ENCODE measurements at regions of chr3 and their contacts with region 1.

Region 1: DNA sequence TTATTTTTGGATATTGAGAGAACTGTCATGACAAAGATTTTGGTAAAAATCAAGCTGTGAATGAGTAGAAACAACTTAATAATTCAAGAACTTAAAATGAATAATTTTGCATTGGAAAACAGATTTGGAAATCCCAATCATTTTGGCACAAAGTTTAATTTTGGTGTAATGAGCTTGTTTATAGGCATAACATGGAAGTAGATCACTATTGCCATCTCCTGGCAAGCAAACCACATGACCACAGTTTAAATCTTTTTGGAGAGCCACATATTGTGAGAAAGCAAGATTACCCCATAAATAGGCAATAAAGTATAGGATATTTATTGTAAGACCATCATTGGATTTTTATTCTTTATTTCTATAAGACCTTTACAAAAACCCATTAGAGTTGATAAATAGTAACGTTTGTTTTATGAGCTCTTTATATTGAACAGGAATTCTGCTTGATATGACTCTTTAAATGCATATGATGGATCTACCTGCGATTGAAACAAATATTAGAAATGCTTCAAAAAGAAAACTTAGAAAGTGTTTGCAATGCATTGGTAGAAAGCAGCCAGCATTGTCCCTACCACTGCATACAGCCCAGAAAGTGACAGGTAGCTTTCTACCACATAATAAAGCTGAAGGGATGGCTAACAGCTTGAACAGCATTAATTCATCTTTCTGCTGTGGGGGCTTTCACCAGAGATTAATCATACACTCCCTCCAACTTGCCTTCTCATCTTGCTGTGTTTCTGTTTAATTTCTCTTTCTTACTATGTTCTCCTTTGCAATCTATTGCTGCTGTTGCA is 766.8 kb downstream of the TBL1XR1 start:
- DNase-seq: peak; percentile 61
- H3K4me3 ChIP-seq: no peak overlapping the region
- H3K27ac ChIP-seq: no peak overlapping the region
- H3K4me1 ChIP-seq: no peaks in the 10 kb centered on the region
- H3K27me3 ChIP-seq: no peaks in the 10 kb centered on the region
- CTCF ChIP-seq: peak; percentile 71

Region 2: DNA sequence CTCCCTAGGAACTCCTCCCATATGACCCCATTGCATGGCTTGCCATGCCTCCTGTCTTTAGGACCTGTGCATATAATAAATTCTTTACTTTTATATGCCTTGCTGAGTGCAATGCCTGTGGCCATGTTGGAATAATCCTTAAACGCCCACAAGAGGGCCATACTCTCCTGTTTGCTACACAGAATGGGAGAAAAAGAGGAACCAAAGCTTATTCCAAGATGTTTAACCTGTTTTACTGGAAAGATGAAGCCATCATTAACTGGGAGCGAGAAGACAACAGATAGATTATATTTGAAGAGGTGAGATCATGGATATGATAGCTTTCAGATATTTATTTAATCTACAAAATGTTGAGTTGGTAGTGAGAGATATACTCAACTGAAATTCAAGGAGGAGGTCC is 473.4 kb before region 1 on chr3:
- CTCF ChIA-PET with region 1: interaction called, 5 read pairs
- POLR2A ChIA-PET with region 1: no interaction called
- intact Hi-C with region 1: loop called (anchors 5 kb)
- DNase-seq: peak; percentile 16
- H3K4me3 ChIP-seq: no peak overlapping the region
- H3K27ac ChIP-seq: no peak overlapping the region
- H3K4me1 ChIP-seq: no peaks in the 10 kb centered on the region
- H3K27me3 ChIP-seq: no peaks in the 10 kb centered on the region
- CTCF ChIP-seq: peak; percentile 45; the same call in 1 of the 2 replicates

Measured in A673 (cell line).